Motor neuron (in vitro differentiated cells): ENCODE measurements at regions of chr9 and their contacts with region 1.

Region 1: DNA sequence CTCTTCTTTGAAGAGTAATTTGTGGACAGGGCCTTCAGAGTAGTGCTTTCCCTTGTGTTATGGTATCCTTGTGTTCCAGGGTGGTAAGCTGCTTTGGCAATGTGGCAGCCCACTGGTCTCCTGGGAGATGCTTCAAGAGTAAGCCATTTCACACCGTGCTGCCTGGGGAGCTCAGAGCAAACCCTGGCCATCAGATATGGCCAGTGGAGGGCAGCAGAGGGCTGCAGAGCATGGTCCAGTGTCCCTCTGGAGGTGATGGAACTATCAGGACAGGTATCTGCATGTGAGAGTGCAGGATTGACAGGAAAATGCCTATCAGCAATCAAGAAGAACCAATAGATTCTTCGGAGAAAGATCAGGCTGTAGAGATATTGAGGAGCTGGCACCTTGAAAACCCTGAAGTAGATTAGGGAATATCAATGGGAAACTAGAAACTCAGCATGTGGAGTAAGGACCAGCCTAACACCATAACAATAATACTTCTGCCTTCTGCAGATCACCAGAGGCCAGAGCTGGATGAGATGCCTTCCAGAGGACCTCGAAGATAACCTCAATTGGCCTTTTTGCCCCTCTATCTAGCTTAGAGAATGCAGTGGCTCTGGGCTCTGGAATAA is 90.8 kb downstream of the PLPPR1 start:
- ATAC-seq: peak in 6 of 8 experiments; percentile 42 to 98 (median 88)
- H3K4me3 ChIP-seq: no peak overlapping the region
- H3K27ac ChIP-seq: no peak overlapping the region
- H3K4me1 ChIP-seq: peaks cover 0 to 19% of the 10 kb centered on the region in 2 donors

Region 2: GRCh38 chr9:101311758-101312420 is 192.6 kb after region 1 on chr9:
- in situ Hi-C with region 1: loop called in 1 of 9 experiments (anchors 25 kb)
- ATAC-seq: peak; percentile 49 to 86 (median 66)
- H3K4me3 ChIP-seq: no peak overlapping the region
- H3K27ac ChIP-seq: no peak overlapping the region
- H3K4me1 ChIP-seq: peaks cover 0 to 2% of the 10 kb centered on the region in 2 donors

Region 3: GRCh38 chr9:101893661-101894646 is 774.6 kb after region 1 on chr9:
- in situ Hi-C with region 1: no loop called
- ATAC-seq: no peak
- H3K4me3 ChIP-seq: no peak overlapping the region
- H3K27ac ChIP-seq: no peak overlapping the region
- H3K4me1 ChIP-seq: no peaks in the 10 kb centered on the region